ENCODE measurements at regions of chr19 and their contacts with region 1.

Region 1: GRCh38 chr19:43743022-43743421 is 11.7 kb downstream of the SMG9 start:
- DNase-seq: no peak
- H3K4me3 ChIP-seq: no peak overlapping the region
- CTCF ChIP-seq: no peak

Region 2: DNA sequence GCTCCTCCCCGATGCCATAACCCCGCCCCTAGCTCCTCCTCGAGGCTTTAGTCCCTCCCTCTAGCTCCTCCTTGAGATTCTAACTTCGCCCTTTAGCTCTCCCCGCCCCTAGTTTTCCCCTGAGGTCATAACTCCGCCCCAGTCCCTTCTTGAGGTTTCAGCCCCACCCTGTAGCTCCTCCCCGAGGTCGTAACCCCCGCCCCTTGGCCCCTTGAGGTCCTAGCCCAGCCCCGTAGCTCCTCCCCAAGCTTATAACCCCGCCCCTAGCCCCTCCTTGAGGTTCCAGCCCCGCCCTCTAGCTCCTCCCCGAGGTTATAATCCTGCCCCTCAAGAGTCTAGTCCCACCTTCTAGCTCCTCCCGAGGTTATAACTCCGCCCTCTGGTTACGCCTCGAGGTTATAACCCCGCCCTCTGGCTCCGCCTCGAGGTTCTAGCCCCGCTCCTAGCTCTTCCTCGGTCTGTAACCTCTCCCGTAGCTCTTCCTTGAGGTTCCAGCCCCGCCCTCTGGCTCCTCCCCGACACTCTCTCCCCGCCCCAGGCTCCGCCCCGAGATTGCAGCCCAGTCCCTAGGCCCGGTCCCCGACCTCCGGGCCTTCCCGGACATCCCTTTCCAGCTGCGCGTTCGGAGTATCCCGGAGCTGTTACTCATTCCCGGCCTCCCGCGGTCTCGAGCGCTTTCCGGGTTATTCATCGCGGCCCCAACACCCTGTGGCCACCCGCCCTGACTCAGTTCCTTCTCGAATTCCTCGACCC is 74.4 kb before region 1 on chr19:
- in situ Hi-C with region 1: loop called (anchors 5 kb)
- DNase-seq: peak; percentile 99
- H3K4me3 ChIP-seq: peak overlapping the region; percentile 80
- CTCF ChIP-seq: no peak

Region 3: DNA sequence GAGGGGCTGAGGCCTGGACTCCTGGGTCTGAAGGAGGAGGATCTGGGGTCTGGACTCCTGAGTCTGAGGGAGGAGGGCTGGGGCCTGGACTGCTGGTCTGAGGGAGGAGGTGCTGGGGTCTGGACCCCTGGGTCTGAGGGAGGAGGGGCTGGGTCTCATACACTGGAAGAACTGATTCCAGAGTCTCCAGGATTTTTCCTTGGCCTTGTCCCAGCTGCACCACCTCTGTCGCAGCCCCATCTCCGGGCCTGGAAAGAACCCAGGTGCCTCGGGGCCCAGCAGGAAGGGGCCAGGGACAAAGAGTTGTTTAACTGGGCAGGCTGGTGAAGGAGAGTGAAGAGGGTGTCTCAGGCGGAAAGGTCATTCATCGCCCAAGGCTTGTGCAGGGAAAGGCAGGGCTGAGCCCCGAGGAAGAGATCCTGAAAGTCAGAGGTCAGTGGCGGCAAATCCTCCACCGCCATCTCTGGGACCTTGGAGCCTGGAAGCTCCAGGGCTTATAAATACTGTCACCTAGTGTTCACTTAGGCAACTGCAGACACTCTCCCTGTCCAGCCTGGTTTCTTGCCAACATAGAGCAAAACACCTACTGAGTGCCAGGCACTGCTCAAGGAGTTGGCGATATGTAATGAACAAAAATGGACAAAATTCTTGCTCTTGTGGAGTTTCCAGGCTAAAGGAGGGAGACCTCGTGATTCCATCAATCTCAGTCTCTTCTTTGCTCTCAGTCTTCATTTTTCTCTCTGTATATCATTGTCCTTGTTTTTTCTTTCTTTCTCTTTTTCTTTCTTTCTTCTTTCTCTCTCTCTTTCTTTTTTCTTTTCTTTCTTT is 42.2 kb after region 1 on chr19:
- in situ Hi-C with region 1: loop called (anchors 5 kb)
- DNase-seq: no peak
- H3K4me3 ChIP-seq: no peak overlapping the region
- CTCF ChIP-seq: peak; percentile 100

Measured in astrocyte of the cerebellum (primary cell).